ENCODE measurements at regions of chr19 and their contacts with region 1.

Region 1: GRCh38 chr19:43534816-43535761 is 2.1 kb downstream of the ZNF575 start:
- DNase-seq: peak; percentile 87

Region 2: DNA sequence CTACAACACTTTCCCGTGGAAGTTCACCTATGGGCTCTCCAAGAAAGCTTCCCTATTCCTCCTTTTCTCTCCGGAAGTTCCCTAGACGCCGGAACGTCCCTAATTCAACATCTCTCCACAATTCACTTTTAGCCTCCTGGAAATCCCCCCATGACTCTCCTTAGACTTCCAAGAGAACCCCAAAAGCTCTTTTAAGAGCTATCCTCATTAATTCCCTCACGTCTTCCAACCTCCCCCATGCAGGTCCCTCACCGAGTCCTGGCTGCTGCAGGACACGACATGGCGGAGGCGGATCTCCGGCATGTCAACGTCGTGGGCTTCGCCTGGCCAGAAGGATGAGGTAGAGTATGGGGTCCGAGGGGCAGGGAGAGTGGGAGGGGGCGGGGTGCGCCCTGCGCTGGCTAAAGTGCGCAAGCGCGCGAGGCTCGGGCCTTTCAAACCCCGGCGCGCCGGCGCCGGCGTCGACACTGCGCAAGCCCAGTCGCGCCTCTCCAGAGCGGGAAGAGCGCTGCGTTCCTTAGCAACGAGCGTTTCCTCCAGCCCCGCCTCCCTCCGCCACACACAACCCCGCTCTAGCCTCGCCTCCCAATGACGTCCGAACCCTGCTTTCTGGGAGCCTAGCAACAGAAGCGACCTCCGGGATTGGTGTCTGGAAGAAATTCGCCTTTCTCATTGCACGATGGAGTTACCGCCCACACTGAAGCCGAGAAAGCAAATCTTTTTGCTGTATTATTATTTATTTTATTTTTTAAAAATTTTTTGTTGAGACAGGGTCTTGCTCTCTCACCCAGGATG is 40.3 kb after region 1 on chr19 and contains the starts of genes PINLYP and XRCC1:
- in situ Hi-C with region 1: loop called (anchors 5 kb)
- DNase-seq: peak; percentile 99
- total RNA-seq, gene PINLYP: 1.5 and 2.7 TPM in 2 replicates
- total RNA-seq, gene XRCC1: 64.5 and 77.2 TPM in 2 replicates

Measured in G401 (cell line).